CD4-positive, alpha-beta memory T cell (primary cell): ENCODE measurements at regions of chr1 and their contacts with region 1.

Region 1: GRCh38 chr1:12619792-12620487 is 1.9 kb upstream of the DHRS3 start:
- DNase-seq: peak; percentile 69 to 77 (median 73)
- H3K4me3 ChIP-seq: peak overlapping the region; percentile 87 to 90
- H3K4me3 Mint-ChIP-seq: peak overlapping the region; percentile 97 to 99 (median 98)
- H3K27ac ChIP-seq: peak overlapping the region; percentile 74
- H3K27ac Mint-ChIP-seq: peak overlapping the region; percentile 64 to 99 (median 76)
- H3K4me1 ChIP-seq: peaks cover 39% of the 10 kb centered on the region
- H3K4me1 Mint-ChIP-seq: peaks cover 18 to 56% (median 37%) of the 10 kb centered on the region in 4 donors
- H3K27me3 ChIP-seq: no peaks in the 10 kb centered on the region
- H3K27me3 Mint-ChIP-seq: peaks cover 0 to 2% of the 10 kb centered on the region in 2 donors

Region 2: DNA sequence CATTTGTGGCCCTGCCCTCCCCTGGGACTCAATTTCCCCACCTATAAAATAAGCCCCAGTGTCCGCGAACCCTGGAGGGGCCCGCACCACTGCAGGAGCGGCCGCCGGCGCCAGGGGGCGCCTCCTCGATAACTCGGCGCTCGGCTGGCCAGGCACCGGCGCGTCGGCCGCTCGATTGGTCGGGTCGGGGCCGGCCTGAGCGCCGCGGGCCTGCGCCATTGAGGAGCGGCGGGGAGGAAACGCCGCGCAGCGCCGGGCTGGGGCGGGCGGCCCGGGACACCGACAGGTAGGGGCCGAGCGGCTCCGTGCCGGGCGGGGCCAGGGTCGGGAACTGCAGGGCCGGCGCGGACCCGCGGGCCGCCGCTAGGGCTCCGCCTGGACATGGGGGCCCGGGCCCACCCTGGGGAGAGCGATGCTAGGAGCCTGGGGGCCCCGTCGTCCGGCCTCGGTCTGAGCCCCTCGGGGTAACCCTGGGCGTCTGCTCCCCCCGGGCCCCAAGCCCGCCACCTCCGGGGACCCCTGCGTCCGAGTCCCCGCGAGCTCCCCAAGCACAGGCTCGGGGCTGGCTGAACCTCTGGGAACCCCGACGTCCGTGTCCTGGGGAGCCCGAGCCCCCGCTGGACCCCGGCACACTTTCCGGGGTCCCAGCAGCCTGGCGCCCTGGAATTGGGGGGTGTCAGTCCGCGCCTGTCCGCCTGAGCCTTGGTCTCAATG is 389.9 kb before region 1 on chr1 and contains the start of gene VPS13D:
- CTCF ChIA-PET with region 1: no interaction called
- POLR2A ChIA-PET with region 1: no interaction called
- intact Hi-C with region 1: loop called (anchors 1 kb)
- DNase-seq: peak; percentile 76 to 84 (median 83)
- H3K4me3 ChIP-seq: peak within 1 kb of the TSS; percentile 86 to 90
- H3K4me3 Mint-ChIP-seq: peak within 1 kb of the TSS; percentile 88 to 93 (median 91)
- H3K27ac ChIP-seq: peak within 1 kb of the TSS; percentile 82
- H3K27ac Mint-ChIP-seq: peak within 1 kb of the TSS in 6 of 7 donors; percentile 81 to 94 (median 92)
- H3K4me1 ChIP-seq: peaks cover 48% of the 10 kb centered on the region
- H3K4me1 Mint-ChIP-seq: peaks cover 13 to 27% (median 22%) of the 10 kb centered on the region in 4 donors
- H3K27me3 ChIP-seq: no peaks in the 10 kb centered on the region
- H3K27me3 Mint-ChIP-seq: no peaks in the 10 kb centered on the region
- total RNA-seq, gene VPS13D: 92.7 to 96.3 TPM

Region 3: DNA sequence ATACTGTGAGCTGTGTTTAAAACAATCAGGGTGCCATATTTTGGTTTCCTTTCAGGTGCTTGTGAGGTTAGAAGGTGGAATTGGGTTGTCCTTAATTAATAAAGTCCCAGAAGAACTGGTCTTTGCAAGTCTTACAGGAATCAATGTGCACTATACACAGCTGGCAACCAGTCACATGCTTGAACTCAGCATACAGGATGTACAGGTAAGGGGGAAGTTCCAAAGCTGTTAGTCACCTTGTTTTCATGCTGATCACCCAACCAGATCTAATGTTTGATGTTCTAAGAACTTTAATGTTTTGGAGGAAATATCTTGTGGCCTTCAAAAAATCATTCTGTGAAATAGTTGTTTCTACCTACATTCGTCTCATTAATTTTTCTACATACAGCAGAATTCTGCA is 233.8 kb before region 1 on chr1:
- CTCF ChIA-PET with region 1: interaction called, 6 read pairs
- POLR2A ChIA-PET with region 1: interaction called, 76 read pairs
- intact Hi-C with region 1: loop called (anchors 5 kb)
- DNase-seq: peak; percentile 30 to 84 (median 52)
- H3K4me3 ChIP-seq: peak overlapping the region in 1 of 2 donors; percentile 40
- H3K4me3 Mint-ChIP-seq: peak overlapping the region; percentile 42 to 80 (median 72)
- H3K27ac ChIP-seq: peak overlapping the region; percentile 58
- H3K27ac Mint-ChIP-seq: peak overlapping the region; percentile 82 to 96 (median 92)
- H3K4me1 ChIP-seq: peaks cover 48% of the 10 kb centered on the region
- H3K4me1 Mint-ChIP-seq: peaks cover 42 to 79% (median 52%) of the 10 kb centered on the region in 4 donors
- H3K27me3 ChIP-seq: no peaks in the 10 kb centered on the region
- H3K27me3 Mint-ChIP-seq: no peaks in the 10 kb centered on the region

Region 4: GRCh38 chr1:12448746-12449177 is 171.2 kb before region 1 on chr1:
- CTCF ChIA-PET with region 1: interaction called, 9 read pairs
- POLR2A ChIA-PET with region 1: interaction called, 5 read pairs
- intact Hi-C with region 1: loop called (anchors 1 kb)
- DNase-seq: no peak
- H3K4me3 ChIP-seq: peak overlapping the region in 1 of 2 donors; percentile 13
- H3K4me3 Mint-ChIP-seq: peak overlapping the region in 7 of 8 donors; percentile 67 to 92 (median 84)
- H3K27ac ChIP-seq: no peak overlapping the region
- H3K27ac Mint-ChIP-seq: peak overlapping the region in 6 of 7 donors; percentile 90 to 98 (median 92)
- H3K4me1 ChIP-seq: peaks cover 67% of the 10 kb centered on the region
- H3K4me1 Mint-ChIP-seq: peaks cover 50 to 84% (median 61%) of the 10 kb centered on the region in 4 donors
- H3K27me3 ChIP-seq: no peaks in the 10 kb centered on the region
- H3K27me3 Mint-ChIP-seq: no peaks in the 10 kb centered on the region

Region 5: DNA sequence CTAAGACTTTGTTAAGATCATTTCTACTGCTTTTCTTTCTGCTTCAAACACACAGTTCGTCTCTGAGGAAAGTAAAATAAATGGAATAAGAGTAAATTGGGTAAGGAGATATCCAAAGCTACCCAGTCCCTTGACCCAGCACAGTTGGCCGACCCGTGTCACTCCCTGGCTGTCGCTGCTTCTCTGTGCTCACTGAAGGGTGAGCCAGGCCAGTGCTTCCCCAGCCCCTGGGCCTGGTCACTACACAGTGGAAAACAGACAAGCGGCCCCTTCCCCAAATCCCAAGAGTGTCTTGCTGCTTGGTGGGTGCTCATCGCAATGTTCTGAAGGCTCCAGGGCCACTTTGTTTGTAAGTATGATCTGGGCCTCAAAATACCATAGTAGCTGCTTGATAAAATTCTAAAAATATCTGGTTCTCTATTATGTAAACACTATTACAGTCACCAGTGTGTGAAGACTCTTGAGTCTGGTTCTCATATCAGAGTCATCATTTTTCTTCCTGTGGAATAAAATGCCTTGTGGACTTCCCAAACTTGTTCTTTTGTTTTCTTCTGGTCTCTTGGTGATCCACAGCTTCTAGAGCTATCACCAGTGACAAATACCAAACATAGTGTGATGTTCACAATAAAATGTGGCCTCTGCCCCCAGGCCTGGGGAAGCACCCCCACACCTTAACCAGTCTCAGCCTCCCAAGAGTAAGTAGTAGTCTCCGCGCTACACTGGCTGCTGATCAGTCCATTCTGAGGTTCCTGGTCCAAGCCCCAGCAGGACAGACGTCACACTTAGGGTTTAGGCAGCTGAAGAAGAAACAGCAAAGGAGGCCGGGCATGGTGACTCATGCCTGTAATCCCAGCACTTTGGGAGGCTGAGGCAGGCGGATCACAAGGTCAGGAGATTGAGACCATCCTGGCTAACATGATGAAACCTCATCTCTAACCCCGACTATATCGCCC is 108.1 kb before region 1 on chr1:
- CTCF ChIA-PET with region 1: interaction called, 19 read pairs
- POLR2A ChIA-PET with region 1: interaction called, 74 read pairs
- intact Hi-C with region 1: loop called (anchors 1 kb)
- DNase-seq: no peak
- H3K4me3 ChIP-seq: peak overlapping the region; percentile 12 to 25
- H3K4me3 Mint-ChIP-seq: peak overlapping the region; percentile 83 to 95 (median 88)
- H3K27ac ChIP-seq: peak overlapping the region; percentile 45
- H3K27ac Mint-ChIP-seq: peak overlapping the region; percentile 22 to 96 (median 88)
- H3K4me1 ChIP-seq: peaks cover 28% of the 10 kb centered on the region
- H3K4me1 Mint-ChIP-seq: peaks cover 30 to 62% (median 49%) of the 10 kb centered on the region in 4 donors
- H3K27me3 ChIP-seq: no peaks in the 10 kb centered on the region
- H3K27me3 Mint-ChIP-seq: no peaks in the 10 kb centered on the region

Region 6: GRCh38 chr1:12658531-12659453 is 38.9 kb after region 1 on chr1:
- CTCF ChIA-PET with region 1: interaction called, 10 read pairs
- POLR2A ChIA-PET with region 1: no interaction called
- intact Hi-C with region 1: loop called (anchors 1 kb)
- DNase-seq: peak; percentile 57 to 65 (median 57)
- H3K4me3 ChIP-seq: no peak overlapping the region
- H3K4me3 Mint-ChIP-seq: peak overlapping the region in 2 of 8 donors; percentile 3 to 29
- H3K27ac ChIP-seq: no peak overlapping the region
- H3K27ac Mint-ChIP-seq: no peak overlapping the region
- H3K4me1 ChIP-seq: peaks cover 4% of the 10 kb centered on the region
- H3K4me1 Mint-ChIP-seq: peaks cover 4 to 8% (median 6%) of the 10 kb centered on the region in 4 donors
- H3K27me3 ChIP-seq: no peaks in the 10 kb centered on the region
- H3K27me3 Mint-ChIP-seq: peaks cover 3 to 6% of the 10 kb centered on the region in 2 donors